ENCODE measurements at regions of chr3 and their contacts with region 1.

Region 1: GRCh38 chr3:50427984-50428633 is 68.8 kb upstream of the TMEM115 start:
- DNase-seq: no peak
- ATAC-seq: no peak
- H3K4me3 Mint-ChIP-seq: no peak overlapping the region
- H3K27ac Mint-ChIP-seq: peak overlapping the region; percentile 51; the same call in 1 of the 2 replicates
- H3K4me1 Mint-ChIP-seq: no peaks in the 10 kb centered on the region; the same call in 1 of the 2 replicates
- H3K27me3 Mint-ChIP-seq: no peaks in the 10 kb centered on the region
- CTCF ChIP-seq: no peak

Region 2: GRCh38 chr3:49813497-49814174 is 614.5 kb before region 1 on chr3 and contains the start of gene UBA7:
- CTCF ChIA-PET with region 1: no interaction called
- POLR2A ChIA-PET with region 1: no interaction called
- DNase-seq: no peak
- ATAC-seq: no peak
- H3K4me3 Mint-ChIP-seq: no peak within 1 kb of the TSS
- H3K27ac Mint-ChIP-seq: no peak within 1 kb of the TSS
- H3K4me1 Mint-ChIP-seq: no peaks in the 10 kb centered on the region
- H3K27me3 Mint-ChIP-seq: no peaks in the 10 kb centered on the region
- CTCF ChIP-seq: no peak
- total RNA-seq, gene UBA7: 1.2 to 1.9 TPM (median 1.6 TPM) in 3 replicates

Region 3: DNA sequence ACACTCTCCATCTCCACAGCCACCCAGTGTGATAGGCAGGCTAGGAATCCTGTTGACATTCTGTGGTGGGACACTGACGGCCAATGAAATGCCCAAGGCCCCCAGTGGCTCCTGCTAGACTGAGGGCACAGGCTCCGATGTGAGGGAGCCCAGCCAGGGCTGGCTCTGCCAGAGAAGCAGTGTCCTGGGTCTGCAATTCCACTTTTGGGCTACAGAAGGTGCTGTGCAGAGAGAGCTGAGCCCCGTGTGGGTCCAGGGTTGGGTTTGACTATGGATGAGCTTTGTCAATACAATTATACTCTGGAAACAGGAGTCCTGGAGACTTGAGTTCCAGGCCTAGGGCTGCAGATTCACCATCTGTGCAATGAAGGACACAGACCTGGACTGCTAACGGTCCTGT is 13.0 kb before region 1 on chr3:
- CTCF ChIA-PET with region 1: interaction called, 12 read pairs
- POLR2A ChIA-PET with region 1: no interaction called
- DNase-seq: peak; percentile 53
- ATAC-seq: peak; percentile 83
- H3K4me3 Mint-ChIP-seq: no peak overlapping the region
- H3K27ac Mint-ChIP-seq: no peak overlapping the region
- H3K4me1 Mint-ChIP-seq: peaks cover 14% of the 10 kb centered on the region
- H3K27me3 Mint-ChIP-seq: no peaks in the 10 kb centered on the region
- CTCF ChIP-seq: peak; percentile 43

Measured in WTC11 (cell line).